Mammary epithelial cell (primary cell): ENCODE measurements at regions of chr3 and their contacts with region 1.

Region 1: DNA sequence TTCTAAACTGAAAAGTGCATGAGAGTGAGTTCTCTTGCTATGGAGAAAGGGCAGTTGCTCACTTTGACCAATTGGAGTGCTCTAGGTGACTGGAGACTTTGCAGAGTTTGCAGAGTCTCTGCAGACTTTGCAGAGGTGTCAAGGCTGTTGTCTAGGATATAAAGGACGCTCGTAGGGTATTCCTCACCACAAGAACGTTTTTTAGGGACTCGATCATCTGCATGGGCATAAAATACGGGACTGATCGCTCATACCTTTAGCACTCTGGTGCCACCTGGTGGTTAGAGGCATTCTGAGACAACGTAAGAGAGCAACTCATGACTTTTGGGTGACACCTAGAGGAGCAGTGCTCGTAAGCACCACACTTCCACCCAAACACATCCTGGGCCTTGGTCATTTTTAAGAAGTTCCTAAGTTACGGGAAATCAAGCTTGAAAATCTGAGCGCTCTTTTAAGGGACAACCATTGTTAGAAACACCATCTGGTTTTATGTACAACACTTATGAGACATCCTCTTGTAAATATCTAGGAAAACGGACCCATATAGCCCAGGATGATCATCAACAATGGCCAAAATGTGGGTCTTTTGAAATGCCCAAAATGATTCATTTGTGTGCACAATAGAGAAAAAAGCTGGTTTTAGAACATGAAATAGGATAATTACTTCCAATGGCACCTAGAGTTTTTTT is 51.6 kb upstream of the XCR1 start:
- DNase-seq: peak; percentile 80
- H3K4me3 ChIP-seq: no peak overlapping the region
- H3K27ac ChIP-seq: no peak overlapping the region
- H3K4me1 ChIP-seq: peaks cover 26% of the 10 kb centered on the region
- H3K27me3 ChIP-seq: no peaks in the 10 kb centered on the region
- CTCF ChIP-seq: peak; percentile 98

Region 2: GRCh38 chr3:45507820-45508317 is 571.0 kb before region 1 on chr3:
- CTCF ChIA-PET with region 1: no interaction called
- dilution Hi-C with region 1: no loop called
- in situ Hi-C with region 1: no loop called
- intact Hi-C with region 1: loop called (anchors 1 kb)
- DNase-seq: no peak
- H3K4me3 ChIP-seq: no peak overlapping the region
- H3K27ac ChIP-seq: no peak overlapping the region
- H3K4me1 ChIP-seq: peaks cover 10% of the 10 kb centered on the region
- H3K27me3 ChIP-seq: no peaks in the 10 kb centered on the region
- CTCF ChIP-seq: no peak

Region 3: GRCh38 chr3:45760878-45761711 is 317.8 kb before region 1 on chr3:
- CTCF ChIA-PET with region 1: no interaction called
- dilution Hi-C with region 1: no loop called
- in situ Hi-C with region 1: loop called in 1 of 2 experiments (anchors 25 kb)
- intact Hi-C with region 1: loop called (anchors 1 kb)
- DNase-seq: peak; percentile 26
- H3K4me3 ChIP-seq: no peak overlapping the region
- H3K27ac ChIP-seq: no peak overlapping the region
- H3K4me1 ChIP-seq: no peaks in the 10 kb centered on the region
- H3K27me3 ChIP-seq: no peaks in the 10 kb centered on the region
- CTCF ChIP-seq: peak; percentile 81 to 90

Region 4: DNA sequence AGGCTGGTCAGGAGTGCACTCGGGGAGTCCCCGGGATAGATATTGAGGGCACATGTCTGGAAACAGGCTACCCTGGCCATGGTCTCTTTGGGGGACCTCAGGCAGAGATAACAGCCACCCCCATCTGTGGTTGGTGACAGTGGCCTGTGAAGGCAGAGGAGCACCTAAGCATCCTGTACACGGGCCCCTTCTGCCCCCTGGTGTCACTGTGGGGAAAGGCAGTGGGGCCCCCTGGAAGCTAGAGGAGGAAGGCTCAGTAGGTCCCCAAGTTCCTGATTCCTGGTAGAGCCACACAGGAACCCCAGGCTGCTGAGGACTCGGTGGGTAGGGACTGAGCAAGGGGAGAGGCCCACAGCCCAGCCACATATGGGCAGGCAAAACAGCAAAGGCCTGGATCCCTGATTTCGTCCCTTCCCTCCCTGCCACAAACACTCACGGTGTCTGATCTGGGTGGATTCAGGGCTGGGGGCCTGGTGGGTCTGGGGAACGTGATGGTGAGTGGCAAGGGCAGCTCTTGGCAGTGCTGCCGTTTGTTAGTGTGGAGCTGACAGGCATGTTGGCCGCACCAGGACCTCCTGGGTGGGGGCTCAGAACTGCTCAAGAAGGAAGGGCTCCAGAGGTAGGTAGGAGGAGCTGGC is 149.7 kb before region 1 on chr3:
- CTCF ChIA-PET with region 1: no interaction called
- dilution Hi-C with region 1: loop called (anchors 5 kb)
- in situ Hi-C with region 1: no loop called
- intact Hi-C with region 1: no loop called
- DNase-seq: no peak
- H3K4me3 ChIP-seq: no peak overlapping the region
- H3K27ac ChIP-seq: no peak overlapping the region
- H3K4me1 ChIP-seq: peaks cover 1% of the 10 kb centered on the region
- H3K27me3 ChIP-seq: no peaks in the 10 kb centered on the region
- CTCF ChIP-seq: peak; percentile 76 to 87

Region 5: GRCh38 chr3:46029953-46030543 is 48.8 kb before region 1 on chr3:
- CTCF ChIA-PET with region 1: no interaction called
- dilution Hi-C with region 1: no loop called
- in situ Hi-C with region 1: no loop called
- intact Hi-C with region 1: no loop called
- DNase-seq: no peak
- H3K4me3 ChIP-seq: no peak overlapping the region
- H3K27ac ChIP-seq: no peak overlapping the region
- H3K4me1 ChIP-seq: no peaks in the 10 kb centered on the region
- H3K27me3 ChIP-seq: no peaks in the 10 kb centered on the region
- CTCF ChIP-seq: no peak

Region 6: GRCh38 chr3:46208167-46208704 is 129.4 kb after region 1 on chr3 and contains the start of gene CCR1:
- CTCF ChIA-PET with region 1: no interaction called
- dilution Hi-C with region 1: no loop called
- in situ Hi-C with region 1: loop called in 1 of 2 experiments (anchors 10 kb)
- intact Hi-C with region 1: loop called (anchors 1 kb)
- DNase-seq: peak; percentile 46
- H3K4me3 ChIP-seq: no peak within 1 kb of the TSS
- H3K27ac ChIP-seq: no peak within 1 kb of the TSS
- H3K4me1 ChIP-seq: peaks cover 11% of the 10 kb centered on the region
- H3K27me3 ChIP-seq: no peaks in the 10 kb centered on the region
- CTCF ChIP-seq: peak; percentile 73 to 86
- total RNA-seq, gene CCR1: not detected

Region 7: GRCh38 chr3:46378426-46378942 is 299.6 kb after region 1 on chr3:
- CTCF ChIA-PET with region 1: no interaction called
- dilution Hi-C with region 1: loop called (anchors 25 kb)
- in situ Hi-C with region 1: no loop called
- intact Hi-C with region 1: loop called (anchors 1 kb)
- DNase-seq: peak; percentile 61
- H3K4me3 ChIP-seq: no peak overlapping the region
- H3K27ac ChIP-seq: no peak overlapping the region
- H3K4me1 ChIP-seq: peaks cover 16% of the 10 kb centered on the region
- H3K27me3 ChIP-seq: no peaks in the 10 kb centered on the region
- CTCF ChIP-seq: peak; percentile 76 to 81